ENCODE measurements at regions of chr1 and their contacts with region 1.

Region 1: GRCh38 chr1:53196485-53197270 is at the start of gene CPT2:
- ATAC-seq: peak; percentile 88 to 99 (median 98)
- H3K4me3 ChIP-seq: peak within 1 kb of the TSS; percentile 59 to 98 (median 79)
- H3K27ac ChIP-seq: peak within 1 kb of the TSS; percentile 61 to 73
- H3K4me1 ChIP-seq: peaks cover 10 to 13% of the 10 kb centered on the region in 2 donors
- total RNA-seq, gene CPT2: 20.1 to 28.6 (median 24.0) TPM

Region 2: GRCh38 chr1:52702886-52703787 is 493.5 kb before region 1 on chr1:
- in situ Hi-C with region 1: loop called in 1 of 9 experiments (anchors 25 kb)
- ATAC-seq: peak; percentile 82 to 91 (median 88)
- H3K4me3 ChIP-seq: peak overlapping the region; percentile 24 to 38 (median 32)
- H3K27ac ChIP-seq: peak overlapping the region; percentile 78 to 80
- H3K4me1 ChIP-seq: peaks cover 10 to 12% of the 10 kb centered on the region in 2 donors

Region 3: GRCh38 chr1:52726265-52727113 is 470.2 kb before region 1 on chr1 and contains the start of gene ZYG11B:
- in situ Hi-C with region 1: loop called in 2 of 9 experiments (anchors 25 kb)
- ATAC-seq: peak; percentile 95 to 98 (median 97)
- H3K4me3 ChIP-seq: peak within 1 kb of the TSS; percentile 68 to 94 (median 78)
- H3K27ac ChIP-seq: peak within 1 kb of the TSS; percentile 89 to 94
- H3K4me1 ChIP-seq: peaks cover 12% of the 10 kb centered on the region in 2 donors
- total RNA-seq, gene ZYG11B: 15.4 to 43.1 (median 31.3) TPM

Region 4: GRCh38 chr1:52970149-52970548 is 226.5 kb before region 1 on chr1:
- in situ Hi-C with region 1: loop called in 1 of 9 experiments (anchors 25 kb)
- ATAC-seq: peak in 1 of 8 experiments; percentile 56
- H3K4me3 ChIP-seq: no peak overlapping the region
- H3K27ac ChIP-seq: no peak overlapping the region
- H3K4me1 ChIP-seq: no peaks in the 10 kb centered on the region

Region 5: DNA sequence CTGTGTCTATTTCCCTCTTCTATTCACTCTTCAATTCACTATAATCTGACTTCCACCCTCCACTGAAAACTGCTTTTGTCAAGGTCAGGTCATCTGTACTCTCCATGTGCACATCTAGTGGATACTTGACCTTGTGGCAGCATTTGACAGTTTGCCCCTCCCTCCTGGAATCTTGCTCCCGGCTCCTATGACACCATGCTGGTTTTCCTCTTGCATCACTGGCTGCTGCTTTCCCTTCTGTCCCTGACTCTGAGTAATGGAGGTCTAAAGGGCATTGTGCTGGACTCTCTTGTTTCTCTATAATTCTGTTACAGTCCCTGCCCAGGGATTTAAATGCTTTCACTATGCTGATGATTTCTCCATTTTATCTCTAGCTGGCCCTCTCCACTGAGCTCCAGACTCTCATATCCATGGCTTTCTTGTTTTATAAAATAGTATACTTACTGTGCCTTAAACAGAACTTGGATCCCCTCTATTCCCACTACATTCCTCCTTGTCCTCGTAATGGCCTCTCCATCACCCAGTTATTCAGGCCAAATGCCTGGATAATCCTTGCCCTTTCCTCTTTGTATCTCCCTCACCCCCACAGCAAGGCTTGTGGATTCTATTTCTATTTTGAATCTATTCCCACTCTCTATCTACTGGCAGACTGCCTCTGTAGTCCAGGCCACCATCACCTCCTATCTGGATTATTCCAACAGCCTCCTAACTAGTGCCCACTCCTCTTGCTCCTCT is 171.5 kb before region 1 on chr1:
- in situ Hi-C with region 1: loop called in 1 of 9 experiments (anchors 25 kb)
- ATAC-seq: peak in 7 of 8 experiments; percentile 89 to 100 (median 99)
- H3K4me3 ChIP-seq: no peak overlapping the region
- H3K27ac ChIP-seq: peak overlapping the region; percentile 54 to 66
- H3K4me1 ChIP-seq: peaks cover 14 to 17% of the 10 kb centered on the region in 2 donors

Region 6: DNA sequence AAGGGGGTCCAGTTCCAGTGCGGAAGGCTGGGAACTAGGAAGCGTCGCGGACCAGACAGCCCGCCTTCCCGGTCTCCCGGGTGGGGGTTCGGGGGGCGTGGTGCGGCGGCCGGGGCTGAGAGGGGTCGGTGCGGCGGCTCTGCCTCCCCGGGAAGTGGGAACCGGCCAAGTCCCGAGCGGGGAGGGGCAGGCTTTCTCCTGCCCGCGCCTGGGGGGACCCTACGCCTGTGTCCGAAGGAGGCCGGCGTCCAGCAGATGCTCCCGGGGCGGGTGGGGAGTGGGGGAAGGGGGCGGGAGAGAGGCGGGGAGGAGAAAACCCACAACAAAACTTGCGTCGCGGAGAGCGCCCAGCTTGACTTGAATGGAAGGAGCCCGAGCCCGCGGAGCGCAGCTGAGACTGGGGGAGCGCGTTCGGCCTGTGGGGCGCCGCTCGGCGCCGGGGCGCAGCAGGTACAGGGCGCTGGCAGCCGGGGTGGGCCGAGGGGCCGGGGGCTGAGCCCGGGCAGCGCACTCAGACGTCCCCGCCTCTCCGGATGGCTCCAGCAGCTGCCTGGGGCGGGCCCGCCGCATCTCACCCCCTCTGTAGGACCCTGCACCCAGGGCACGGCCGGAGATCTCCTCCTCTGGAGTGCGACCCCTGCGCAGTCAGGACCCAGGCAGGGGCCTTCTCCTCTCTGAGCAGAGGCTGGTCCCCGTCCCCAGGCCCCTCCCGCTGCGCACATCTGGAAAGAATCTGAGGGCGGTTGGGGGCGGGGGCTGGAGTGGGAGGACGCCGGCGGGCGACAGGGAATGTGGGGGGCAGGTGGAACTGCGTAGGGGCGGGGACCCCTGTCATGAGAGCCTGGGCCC is 134.6 kb before region 1 on chr1 and contains the start of gene PODN:
- in situ Hi-C with region 1: loop called in 1 of 9 experiments (anchors 25 kb)
- ATAC-seq: peak; percentile 44 to 81 (median 76)
- H3K4me3 ChIP-seq: peak within 1 kb of the TSS; percentile 25 to 37 (median 34)
- H3K27ac ChIP-seq: no peak within 1 kb of the TSS
- H3K4me1 ChIP-seq: peaks cover 0 to 9% of the 10 kb centered on the region in 2 donors
- total RNA-seq, gene PODN: 0.05 to 37.9 (median 1.2) TPM

Measured in motor neuron (in vitro differentiated cells).